A673 (cell line): ENCODE measurements at regions of chr1 and their contacts with region 1.

Region 1: DNA sequence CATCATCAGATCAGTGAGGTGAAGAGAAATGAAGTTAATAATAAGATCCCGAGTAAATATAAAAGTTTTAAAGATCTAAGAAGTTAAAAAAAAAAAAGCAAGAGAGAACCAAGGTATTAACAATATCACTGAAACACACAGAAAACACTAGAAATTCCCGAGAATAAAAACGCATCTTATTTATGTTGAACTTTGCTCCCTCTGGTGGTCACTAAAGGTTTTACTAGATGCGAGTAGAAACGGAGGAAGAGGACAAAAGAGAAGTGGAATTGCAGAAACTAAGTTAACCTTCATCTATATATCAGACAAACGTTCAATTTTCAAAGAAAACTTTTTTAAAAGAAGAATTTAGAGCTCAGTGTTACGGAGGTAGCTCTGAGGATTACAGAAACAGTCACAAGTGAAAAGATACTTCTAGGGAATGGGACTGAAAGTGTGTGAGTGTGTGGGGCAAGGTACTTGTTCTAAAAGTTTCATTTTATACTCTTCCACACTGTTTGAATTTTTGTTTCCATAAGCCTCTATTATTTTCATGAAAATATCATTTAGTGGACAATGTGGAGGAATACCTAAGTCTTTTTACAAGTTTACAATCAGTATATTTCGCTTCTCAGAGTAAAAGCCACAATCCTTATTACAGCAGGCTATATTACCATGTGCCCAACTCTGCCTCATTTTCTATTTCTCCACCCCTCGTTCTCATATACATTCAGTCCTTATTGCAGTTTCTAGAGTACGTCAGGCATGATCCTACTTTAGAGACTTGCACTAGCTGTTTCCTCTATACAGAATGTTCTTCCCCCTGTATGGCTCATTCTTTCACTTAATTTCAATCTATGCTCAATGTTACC is 19.7 kb downstream of the ACBD6 start:
- DNase-seq: peak; percentile 71
- H3K4me3 ChIP-seq: no peak overlapping the region
- H3K27ac ChIP-seq: no peak overlapping the region
- H3K4me1 ChIP-seq: peaks cover 12% of the 10 kb centered on the region
- H3K27me3 ChIP-seq: no peaks in the 10 kb centered on the region
- CTCF ChIP-seq: peak; percentile 86

Region 2: GRCh38 chr1:179706339-179706941 is 776.2 kb before region 1 on chr1:
- CTCF ChIA-PET with region 1: no interaction called
- POLR2A ChIA-PET with region 1: no interaction called
- intact Hi-C with region 1: loop called (anchors 5 kb)
- DNase-seq: peak; percentile 75
- H3K4me3 ChIP-seq: no peak overlapping the region
- H3K27ac ChIP-seq: no peak overlapping the region
- H3K4me1 ChIP-seq: no peaks in the 10 kb centered on the region
- H3K27me3 ChIP-seq: no peaks in the 10 kb centered on the region
- CTCF ChIP-seq: peak; percentile 88

Region 3: DNA sequence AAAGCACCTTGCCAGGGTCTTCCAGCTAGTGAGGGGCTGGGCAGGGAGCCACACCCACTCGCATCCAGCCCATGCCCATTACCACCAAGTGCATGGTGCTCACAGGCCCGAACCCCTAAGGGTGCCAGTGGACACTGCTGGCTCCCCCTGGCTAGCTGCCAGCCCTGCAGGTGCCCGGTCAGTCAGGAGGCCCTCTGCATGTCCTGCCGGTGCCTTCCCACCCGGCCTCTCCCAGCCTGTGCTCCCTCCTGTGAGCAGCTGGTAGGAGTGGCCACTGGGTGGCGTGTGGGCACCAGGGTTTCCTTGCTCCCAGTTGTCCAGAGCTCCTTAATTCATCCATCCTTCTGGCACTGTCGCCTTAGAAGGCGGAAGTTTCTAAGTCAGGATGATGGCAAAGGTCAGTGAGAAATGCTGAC is 294.6 kb before region 1 on chr1:
- CTCF ChIA-PET with region 1: interaction called, 4 read pairs
- POLR2A ChIA-PET with region 1: no interaction called
- intact Hi-C with region 1: loop called (anchors 2 kb)
- DNase-seq: peak; percentile 72
- H3K4me3 ChIP-seq: no peak overlapping the region
- H3K27ac ChIP-seq: no peak overlapping the region
- H3K4me1 ChIP-seq: no peaks in the 10 kb centered on the region
- H3K27me3 ChIP-seq: no peaks in the 10 kb centered on the region
- CTCF ChIP-seq: peak; percentile 85

Region 4: DNA sequence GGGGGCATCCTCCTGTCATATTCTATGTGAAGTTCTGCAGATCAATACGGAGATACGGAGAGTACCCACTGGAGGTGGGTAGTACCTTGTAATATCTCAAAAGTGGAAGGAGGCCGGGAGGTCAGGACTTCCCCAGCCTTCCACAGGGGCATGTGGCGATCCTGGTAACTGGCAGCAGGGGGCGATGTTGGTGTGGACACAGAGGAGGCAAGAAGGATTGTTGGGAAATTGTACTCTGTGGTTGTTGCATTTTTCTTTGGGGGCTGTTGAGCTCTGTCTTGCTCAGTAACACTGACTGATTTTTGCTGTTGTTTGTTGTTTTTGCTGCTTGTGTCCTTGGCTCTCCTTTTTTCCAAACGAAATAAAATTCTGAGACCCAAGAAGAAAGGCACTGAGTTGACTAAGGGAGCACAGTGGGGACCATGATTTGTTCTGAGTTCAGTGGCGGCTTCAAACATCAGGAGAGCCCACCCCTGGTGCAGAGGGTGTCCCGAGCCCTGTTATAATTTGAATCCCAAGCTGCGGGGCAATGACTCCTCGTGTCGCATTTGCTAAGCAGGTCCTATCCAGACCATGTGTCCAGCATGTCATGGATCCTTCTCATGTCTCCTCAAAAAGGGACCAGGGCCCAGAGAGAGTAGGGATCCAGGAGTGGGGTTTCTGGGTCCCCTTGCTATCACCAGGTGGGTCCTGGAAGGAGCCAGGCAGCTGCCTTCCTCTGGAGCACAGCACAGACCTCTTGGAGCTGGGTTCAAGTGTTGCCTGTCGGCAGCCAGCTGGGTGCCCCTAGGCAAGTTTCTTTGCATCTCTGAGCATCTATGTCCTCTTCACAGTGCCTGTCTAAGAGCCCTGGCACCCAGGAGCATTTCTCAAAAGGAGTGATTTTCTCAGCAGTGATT is 229.8 kb before region 1 on chr1:
- CTCF ChIA-PET with region 1: interaction called, 4 read pairs
- POLR2A ChIA-PET with region 1: no interaction called
- intact Hi-C with region 1: loop called (anchors 2 kb)
- DNase-seq: peak; percentile 80
- H3K4me3 ChIP-seq: no peak overlapping the region
- H3K27ac ChIP-seq: no peak overlapping the region
- H3K4me1 ChIP-seq: no peaks in the 10 kb centered on the region
- H3K27me3 ChIP-seq: no peaks in the 10 kb centered on the region
- CTCF ChIP-seq: peak; percentile 92